Activated naive CD4-positive, alpha-beta T cell treated with anti-CD3 and anti-CD28 coated beads for 36 hours (primary cell): ENCODE measurements at regions of chr10 and their contacts with region 1.

Region 1: GRCh38 chr10:61592581-61592980 is 70.1 kb upstream of the CABCOCO1 start:
- DNase-seq: no peak
- H3K4me3 Mint-ChIP-seq: no peak overlapping the region
- H3K27ac Mint-ChIP-seq: no peak overlapping the region
- H3K4me1 Mint-ChIP-seq: no peaks in the 10 kb centered on the region
- H3K27me3 Mint-ChIP-seq: peaks cover 6% of the 10 kb centered on the region

Region 2: DNA sequence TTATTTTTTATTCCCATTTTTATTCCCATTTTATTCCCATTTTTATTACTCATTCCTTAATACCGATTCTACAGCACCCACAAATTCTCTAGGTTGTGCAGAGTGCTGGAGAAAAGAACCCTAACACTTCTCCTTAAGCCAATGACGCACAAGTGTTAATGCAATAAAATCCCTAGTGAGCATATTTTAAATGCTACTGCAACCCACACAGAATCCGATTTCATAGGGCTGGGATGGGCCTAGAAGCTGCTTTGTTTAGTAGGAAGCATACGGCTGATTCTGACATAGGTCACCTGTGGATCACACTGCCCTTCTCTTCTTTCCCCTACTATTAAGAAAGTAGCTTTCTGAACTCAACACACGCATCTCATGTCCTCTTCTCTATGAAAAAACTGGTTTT is 25.0 kb after region 1 on chr10:
- CTCF ChIA-PET with region 1: no interaction called
- intact Hi-C with region 1: no loop called
- DNase-seq: no peak
- H3K4me3 Mint-ChIP-seq: no peak overlapping the region
- H3K27ac Mint-ChIP-seq: no peak overlapping the region
- H3K4me1 Mint-ChIP-seq: no peaks in the 10 kb centered on the region
- H3K27me3 Mint-ChIP-seq: peaks cover 4% of the 10 kb centered on the region

Region 3: GRCh38 chr10:61708846-61709245 is 116.3 kb after region 1 on chr10:
- CTCF ChIA-PET with region 1: no interaction called
- intact Hi-C with region 1: loop called (anchors 5 kb)
- DNase-seq: no peak
- H3K4me3 Mint-ChIP-seq: no peak overlapping the region
- H3K27ac Mint-ChIP-seq: no peak overlapping the region
- H3K4me1 Mint-ChIP-seq: no peaks in the 10 kb centered on the region
- H3K27me3 Mint-ChIP-seq: peaks cover 4% of the 10 kb centered on the region